ENCODE measurements at regions of chr3 and their contacts with region 1.

Region 1: GRCh38 chr3:154095832-154096421 is 25.3 kb upstream of the ARHGEF26 start:
- DNase-seq: no peak
- H3K4me3 ChIP-seq: no peak overlapping the region
- H3K27ac ChIP-seq: peak overlapping the region in 1 of 4 donors; percentile 15
- H3K4me1 ChIP-seq: peaks cover 0 to 38% (median 33%) of the 10 kb centered on the region in 4 donors
- H3K27me3 ChIP-seq: no peaks in the 10 kb centered on the region
- CTCF ChIP-seq: peak; percentile 39 to 56 (median 51)
- EP300 ChIP-seq: no peak
- POLR2A ChIP-seq: no peak

Region 2: GRCh38 chr3:154003649-154004048 is 92.3 kb before region 1 on chr3:
- intact Hi-C with region 1: loop called (anchors 10 kb)
- DNase-seq: no peak
- H3K4me3 ChIP-seq: no peak overlapping the region
- H3K27ac ChIP-seq: no peak overlapping the region
- H3K4me1 ChIP-seq: no peaks in the 10 kb centered on the region
- H3K27me3 ChIP-seq: no peaks in the 10 kb centered on the region
- CTCF ChIP-seq: no peak
- EP300 ChIP-seq: no peak
- POLR2A ChIP-seq: no peak

Region 3: GRCh38 chr3:154120961-154121700 is 25.2 kb after region 1 on chr3 and contains the start of gene ARHGEF26:
- intact Hi-C with region 1: no loop called
- DNase-seq: peak; percentile 94
- H3K4me3 ChIP-seq: peak within 1 kb of the TSS; percentile 73 to 97 (median 90)
- H3K27ac ChIP-seq: peak within 1 kb of the TSS; percentile 81 to 91 (median 86)
- H3K4me1 ChIP-seq: peaks cover 9 to 29% (median 21%) of the 10 kb centered on the region in 4 donors
- H3K27me3 ChIP-seq: no peaks in the 10 kb centered on the region
- CTCF ChIP-seq: no peak
- EP300 ChIP-seq: no peak
- POLR2A ChIP-seq: no peak
- total RNA-seq, gene ARHGEF26: 124 to 158 (median 132) TPM

Measured in esophagus muscularis mucosa (tissue), 4 donors.